Posterior vena cava (tissue), 2 donors: ENCODE measurements at regions of chr19 and their contacts with region 1.

Region 1: DNA sequence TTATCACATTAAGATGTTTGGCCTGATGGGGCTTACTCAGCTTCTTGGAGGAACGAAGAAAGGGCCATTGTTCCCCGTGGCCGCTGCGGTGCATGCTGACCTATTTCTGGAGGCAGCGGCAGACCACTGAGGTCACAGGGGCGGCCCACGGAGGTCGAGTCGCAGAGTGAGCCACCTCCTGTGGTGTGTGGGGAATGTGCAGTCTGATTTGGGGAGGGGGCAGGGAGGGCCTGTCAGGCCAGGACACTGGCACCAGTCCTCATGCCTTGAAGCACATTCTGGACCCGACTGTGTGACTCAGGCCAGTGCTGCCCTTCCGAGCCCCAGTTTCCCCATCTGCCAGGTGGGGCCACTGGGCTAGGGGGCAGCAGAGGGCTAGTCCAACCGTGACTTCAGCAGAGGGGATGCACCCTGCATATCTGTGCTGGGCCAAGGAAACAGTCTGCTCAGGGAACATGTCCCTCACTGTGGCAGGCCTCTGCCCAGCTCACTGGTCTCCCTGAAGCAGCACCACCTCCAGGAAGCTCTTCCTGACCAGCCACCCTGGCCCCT is 6.3 kb downstream of the SLC7A10 start:
- DNase-seq: no peak

Region 2: DNA sequence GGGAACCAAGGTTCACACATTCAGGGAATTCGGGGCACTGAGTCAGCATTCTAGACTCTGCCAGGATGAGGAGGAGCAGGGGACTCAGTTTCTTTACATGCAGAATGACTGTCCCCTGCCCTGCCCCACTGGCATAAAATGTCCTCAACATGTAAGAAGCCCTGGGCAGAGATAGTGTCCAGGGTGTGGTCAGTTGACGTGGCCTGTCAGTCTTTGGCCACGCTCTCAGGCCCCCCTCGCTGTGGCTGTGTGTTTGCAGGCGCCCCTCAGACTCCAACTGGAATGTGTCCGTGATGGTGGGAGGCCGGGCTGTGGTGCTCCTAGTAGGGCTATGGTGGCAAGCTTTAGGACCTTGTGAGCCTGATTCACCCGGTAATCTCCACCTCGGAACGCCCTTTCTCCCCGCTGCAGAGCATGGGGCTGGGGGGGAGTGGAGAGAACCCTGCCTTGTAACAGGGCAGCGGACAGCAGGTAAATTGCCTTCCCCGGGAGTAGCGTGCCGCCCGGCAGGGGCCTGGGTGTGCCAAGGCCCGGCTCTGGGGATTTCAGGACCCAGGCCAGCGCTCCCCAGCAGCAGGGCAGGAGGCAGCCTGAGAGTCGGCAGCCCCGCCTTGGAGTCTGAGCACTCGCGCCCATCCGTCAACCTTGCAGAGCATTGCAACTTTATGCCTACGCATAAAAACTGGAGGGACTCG is 464.7 kb after region 1 on chr19:
- intact Hi-C with region 1: loop called in 1 of 2 experiments (anchors 5 kb)
- DNase-seq: peak; percentile 73